Gastrocnemius medialis (tissue), 4 donors: ENCODE measurements at regions of chr7 and their contacts with region 1.

Region 1: DNA sequence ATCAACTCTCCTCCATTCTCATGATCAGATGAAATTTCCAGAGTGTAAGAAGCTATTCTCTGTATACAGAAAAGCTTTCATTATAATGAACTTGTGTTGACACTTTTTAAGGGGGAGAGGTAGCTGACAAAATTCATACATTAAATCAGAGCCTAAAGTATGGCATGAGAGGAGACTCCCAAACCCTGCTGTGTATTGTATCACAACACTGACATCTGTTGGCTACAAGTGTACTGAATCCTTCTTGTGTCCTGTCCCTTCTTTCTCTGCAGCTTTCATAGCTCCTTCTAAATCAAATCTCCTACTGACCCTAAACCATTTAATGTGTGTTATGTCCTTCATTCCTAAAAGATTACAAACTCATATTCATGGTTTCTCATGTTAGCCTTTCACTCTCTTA is 70.9 kb downstream of the GCC1 start:
- DNase-seq: no peak
- ATAC-seq: no peak
- H3K4me3 ChIP-seq: no peak overlapping the region
- H3K27ac ChIP-seq: no peak overlapping the region
- H3K4me1 ChIP-seq: no peaks in the 10 kb centered on the region
- H3K27me3 ChIP-seq: peaks cover 0 to 2% (median 0%) of the 10 kb centered on the region in 3 donors
- CTCF ChIP-seq: no peak
- POLR2A ChIP-seq: no peak

Region 2: DNA sequence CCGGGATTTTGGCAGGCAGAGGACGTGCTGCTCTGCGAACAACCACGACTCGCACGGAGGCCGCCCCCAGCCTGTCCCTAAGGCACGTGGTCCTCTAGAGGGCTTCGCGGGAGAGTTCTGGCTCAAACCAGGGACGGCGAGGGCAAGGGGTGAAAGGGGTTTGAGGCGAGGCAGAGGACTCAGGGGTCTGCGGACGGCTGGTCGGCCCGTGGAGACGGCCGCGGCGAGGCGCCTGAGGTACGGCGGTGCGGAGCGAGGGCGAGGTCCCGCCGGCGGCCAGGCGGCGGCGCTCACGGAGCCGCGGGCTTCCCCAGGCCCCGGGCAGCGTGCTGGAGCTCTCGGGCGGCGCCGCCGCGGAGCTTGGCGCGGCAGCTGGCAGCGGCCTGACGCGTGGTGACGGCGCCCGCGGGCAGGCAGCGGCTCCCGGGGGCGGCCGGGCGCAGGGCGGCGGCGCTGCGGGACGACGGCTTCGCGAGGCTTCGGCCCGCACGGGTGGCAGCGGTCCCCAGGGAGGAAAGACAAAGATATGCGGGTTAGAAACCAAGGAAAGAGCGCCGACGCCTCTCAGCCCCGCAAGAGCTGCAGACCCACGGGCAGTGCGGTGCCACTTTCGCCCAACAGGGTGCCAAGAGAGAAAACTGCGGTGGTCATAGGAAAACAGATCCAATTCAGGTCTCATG is 166.8 kb before region 1 on chr7:
- in situ Hi-C with region 1: no loop called
- intact Hi-C with region 1: loop called (anchors 10 kb)
- DNase-seq: peak; percentile 6 to 46
- ATAC-seq: peak; percentile 62 to 89
- H3K4me3 ChIP-seq: peak overlapping the region; percentile 22 to 44 (median 33)
- H3K27ac ChIP-seq: no peak overlapping the region
- H3K4me1 ChIP-seq: no peaks in the 10 kb centered on the region
- H3K27me3 ChIP-seq: no peaks in the 10 kb centered on the region
- CTCF ChIP-seq: peak in 3 of 5 experiments; percentile 40 to 63 (median 47)
- POLR2A ChIP-seq: no peak

Region 3: DNA sequence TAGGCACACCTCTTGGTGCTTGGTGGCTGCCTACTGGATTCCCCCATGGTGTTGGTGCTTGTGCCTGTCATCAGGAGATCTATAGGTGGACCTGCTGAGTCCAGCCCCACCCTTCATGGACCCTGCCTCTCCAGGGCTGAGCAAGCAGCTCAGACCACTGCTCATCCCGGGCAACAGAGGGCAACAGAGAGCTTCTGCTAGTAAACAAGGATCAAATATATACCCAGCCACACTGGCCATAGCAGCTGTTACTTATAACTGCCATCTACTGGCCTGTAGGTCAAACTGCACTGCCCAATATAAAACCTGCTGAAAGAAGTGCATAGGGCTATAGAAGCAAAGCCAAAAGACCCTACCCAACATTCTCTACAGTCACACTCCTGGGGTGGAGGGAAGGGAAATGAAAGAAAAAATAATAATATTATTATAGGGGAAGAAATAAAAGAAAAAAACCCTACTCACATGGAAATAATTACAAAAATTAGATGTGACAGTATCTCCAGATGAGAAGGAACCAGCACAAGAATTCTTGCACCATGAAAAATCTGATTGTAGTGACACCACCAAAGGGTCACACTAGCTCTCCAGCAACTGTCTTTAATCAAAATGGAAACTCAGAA is 67.1 kb before region 1 on chr7:
- in situ Hi-C with region 1: no loop called
- intact Hi-C with region 1: no loop called
- DNase-seq: no peak
- ATAC-seq: no peak
- H3K4me3 ChIP-seq: no peak overlapping the region
- H3K27ac ChIP-seq: no peak overlapping the region
- H3K4me1 ChIP-seq: no peaks in the 10 kb centered on the region
- H3K27me3 ChIP-seq: no peaks in the 10 kb centered on the region
- CTCF ChIP-seq: no peak
- POLR2A ChIP-seq: no peak